ENCODE measurements at regions of chr11 and their contacts with region 1.

Region 1: GRCh38 chr11:45857961-45858474 is 10.7 kb downstream of the CRY2 start:
- DNase-seq: peak; percentile 94
- H3K4me3 ChIP-seq: no peak overlapping the region
- H3K27ac ChIP-seq: peak overlapping the region; percentile 64
- H3K4me1 ChIP-seq: peaks cover 28% of the 10 kb centered on the region
- H3K27me3 ChIP-seq: no peaks in the 10 kb centered on the region
- CTCF ChIP-seq: no peak
- POLR2A ChIP-seq: no peak

Region 2: DNA sequence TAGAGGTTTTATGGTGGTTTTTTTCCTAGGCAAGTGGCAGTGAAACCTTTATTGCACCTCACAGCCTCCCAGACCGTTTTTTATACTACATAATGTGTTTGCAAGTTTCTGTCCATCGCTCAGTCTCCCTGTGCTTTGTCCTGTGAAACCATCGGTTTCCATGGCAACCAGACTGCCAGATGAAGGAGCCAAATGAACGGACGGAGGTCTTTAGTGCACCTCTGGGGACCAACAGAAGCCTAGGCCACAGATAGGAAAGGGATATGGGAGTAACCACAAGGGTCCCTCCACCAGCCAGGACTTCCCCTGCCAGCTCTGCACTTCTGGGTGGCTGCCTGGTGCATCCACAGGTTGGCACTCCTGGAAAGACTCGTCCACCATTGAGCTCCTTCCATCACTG is 357.6 kb before region 1 on chr11:
- CTCF ChIA-PET with region 1: no interaction called
- POLR2A ChIA-PET with region 1: no interaction called
- dilution Hi-C with region 1: no loop called
- intact Hi-C with region 1: no loop called
- DNase-seq: no peak
- H3K4me3 ChIP-seq: no peak overlapping the region
- H3K27ac ChIP-seq: no peak overlapping the region
- H3K4me1 ChIP-seq: no peaks in the 10 kb centered on the region
- H3K27me3 ChIP-seq: peaks cover 3 to 12% of the 10 kb centered on the region in 2 experiments
- CTCF ChIP-seq: no peak
- POLR2A ChIP-seq: no peak

Region 3: GRCh38 chr11:45846974-45847910 is 10.8 kb before region 1 on chr11 and contains the start of gene CRY2:
- CTCF ChIA-PET with region 1: interaction called, 5 read pairs
- POLR2A ChIA-PET with region 1: interaction called, 5 read pairs
- dilution Hi-C with region 1: no loop called
- intact Hi-C with region 1: loop called (anchors 1 kb)
- DNase-seq: peak; percentile 98
- H3K4me3 ChIP-seq: peak within 1 kb of the TSS; percentile 39 to 81 (median 68)
- H3K27ac ChIP-seq: peak within 1 kb of the TSS; percentile 63
- H3K4me1 ChIP-seq: peaks cover 13% of the 10 kb centered on the region
- H3K27me3 ChIP-seq: peaks cover 7 to 12% of the 10 kb centered on the region in 2 experiments
- CTCF ChIP-seq: no peak
- POLR2A ChIP-seq: peak; percentile 81
- total RNA-seq, gene CRY2: 8.8 and 11.7 TPM in 2 replicates